Panc1 (cell line): ENCODE measurements at regions of chr11 and their contacts with region 1.

Region 1: DNA sequence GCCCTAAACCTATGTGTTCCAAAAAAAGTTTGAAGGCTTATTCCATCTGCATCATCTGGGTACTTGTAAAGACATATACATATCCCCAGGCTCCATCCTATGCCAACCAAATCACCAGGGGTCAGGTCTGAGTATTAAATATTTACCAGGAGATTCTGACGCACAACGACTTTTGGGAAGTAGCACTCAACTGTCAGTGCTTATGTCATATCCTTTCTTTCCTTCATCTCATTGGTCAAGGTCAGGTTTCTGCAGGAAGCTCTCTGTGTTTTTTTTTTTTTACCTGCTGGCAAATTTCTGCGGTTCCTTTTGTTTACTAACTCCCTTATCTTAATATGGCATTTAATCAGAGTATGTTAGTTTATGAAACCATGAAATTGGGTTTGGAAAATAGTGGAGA is 22.5 kb upstream of the CYP2R1 start:
- DNase-seq: no peak
- ATAC-seq: no peak
- H3K4me3 ChIP-seq: no peak overlapping the region
- H3K27ac ChIP-seq: no peak overlapping the region
- H3K4me1 ChIP-seq: no peaks in the 10 kb centered on the region
- H3K27me3 ChIP-seq: peaks cover 13% of the 10 kb centered on the region
- CTCF ChIP-seq: no peak

Region 2: GRCh38 chr11:15189641-15190365 is 275.3 kb after region 1 on chr11:
- CTCF ChIA-PET with region 1: interaction called, 10 read pairs
- POLR2A ChIA-PET with region 1: no interaction called
- in situ Hi-C with region 1: no loop called
- intact Hi-C with region 1: no loop called
- DNase-seq: no peak
- ATAC-seq: no peak
- H3K4me3 ChIP-seq: no peak overlapping the region
- H3K27ac ChIP-seq: no peak overlapping the region
- H3K4me1 ChIP-seq: no peaks in the 10 kb centered on the region
- H3K27me3 ChIP-seq: no peaks in the 10 kb centered on the region; the same call in 1 of the 2 replicates
- CTCF ChIP-seq: no peak